GM23248 (cell line): ENCODE measurements at regions of chr21 and their contacts with region 1.

Region 1: GRCh38 chr21:22791986-22792560 is 1793.9 kb downstream of the NCAM2 start:
- DNase-seq: peak; percentile 70
- H3K4me3 ChIP-seq: no peak overlapping the region
- H3K27ac ChIP-seq: no peak overlapping the region
- H3K4me1 ChIP-seq: no peaks in the 10 kb centered on the region
- H3K27me3 ChIP-seq: no peaks in the 10 kb centered on the region

Region 2: DNA sequence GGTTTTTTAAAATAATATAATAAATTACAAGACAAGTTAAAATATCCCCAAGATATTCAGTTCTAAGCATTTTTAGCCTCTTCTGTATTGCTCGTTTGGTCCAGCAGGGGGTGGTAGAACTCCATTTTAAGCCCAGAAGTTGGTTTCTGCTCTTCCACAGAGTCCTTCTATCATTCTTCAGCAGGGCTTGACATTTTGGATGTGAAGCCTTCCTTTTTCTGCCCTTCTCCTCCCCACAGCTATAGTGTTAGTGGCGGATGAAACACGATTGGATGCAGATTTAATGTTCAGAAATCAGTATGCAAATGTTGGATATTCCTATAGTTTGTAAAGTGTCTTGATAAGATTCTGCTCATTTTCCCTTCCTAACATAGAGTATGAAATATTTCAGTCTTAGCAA is 1792.4 kb before region 1 on chr21:
- in situ Hi-C with region 1: loop called (anchors 25 kb)
- DNase-seq: peak; percentile 50
- H3K4me3 ChIP-seq: no peak overlapping the region
- H3K27ac ChIP-seq: no peak overlapping the region
- H3K4me1 ChIP-seq: no peaks in the 10 kb centered on the region
- H3K27me3 ChIP-seq: no peaks in the 10 kb centered on the region; the same call in 1 of the 2 replicates

Region 3: DNA sequence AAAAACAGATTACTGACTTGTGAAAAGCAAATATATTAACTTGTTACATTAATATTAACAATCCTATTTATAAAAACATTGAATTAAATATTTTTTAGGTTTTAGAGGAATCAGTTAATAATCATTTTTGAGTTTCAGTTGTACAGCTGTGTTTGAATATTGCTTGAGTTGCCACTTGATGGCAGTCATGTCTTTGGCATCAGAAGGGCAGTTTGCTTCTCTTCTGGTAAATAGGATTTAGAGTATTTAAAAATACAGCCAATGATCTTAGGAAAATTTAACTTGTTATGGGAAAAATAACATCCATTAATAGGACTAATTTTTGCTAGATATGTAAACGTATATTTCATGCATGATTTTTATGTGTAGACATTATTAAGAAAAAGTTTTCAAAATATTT is 1559.8 kb before region 1 on chr21:
- in situ Hi-C with region 1: loop called (anchors 25 kb)
- DNase-seq: peak; percentile 61
- H3K4me3 ChIP-seq: no peak overlapping the region
- H3K27ac ChIP-seq: no peak overlapping the region
- H3K4me1 ChIP-seq: no peaks in the 10 kb centered on the region
- H3K27me3 ChIP-seq: no peaks in the 10 kb centered on the region

Region 4: DNA sequence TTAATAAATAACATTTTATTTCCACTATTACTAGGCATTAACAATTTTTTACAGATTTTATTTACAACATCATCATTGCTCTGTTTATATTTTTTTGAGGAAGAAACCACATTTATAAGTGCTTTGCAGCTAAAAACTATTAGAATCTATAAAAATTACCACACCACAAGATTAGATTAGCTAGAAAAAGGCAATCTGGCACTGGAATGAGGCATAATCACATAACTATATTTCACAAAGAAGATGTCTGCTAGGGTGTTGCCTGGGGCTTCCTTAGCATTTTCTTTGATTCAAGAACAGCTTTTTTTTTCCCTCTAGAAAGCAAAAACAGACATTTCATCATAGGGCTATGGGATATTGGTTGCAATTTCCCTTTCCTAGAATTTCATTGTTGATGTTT is 646.0 kb after region 1 on chr21:
- in situ Hi-C with region 1: no loop called
- DNase-seq: no peak
- H3K4me3 ChIP-seq: no peak overlapping the region
- H3K27ac ChIP-seq: no peak overlapping the region
- H3K4me1 ChIP-seq: no peaks in the 10 kb centered on the region
- H3K27me3 ChIP-seq: no peaks in the 10 kb centered on the region

Region 5: GRCh38 chr21:23900727-23901126 is 1108.7 kb after region 1 on chr21:
- in situ Hi-C with region 1: no loop called
- DNase-seq: no peak
- H3K4me3 ChIP-seq: no peak overlapping the region
- H3K27ac ChIP-seq: no peak overlapping the region
- H3K4me1 ChIP-seq: no peaks in the 10 kb centered on the region
- H3K27me3 ChIP-seq: no peaks in the 10 kb centered on the region